ENCODE measurements at regions of chr18 and their contacts with region 1.

Region 1: GRCh38 chr18:48030616-48031480 is 100.4 kb upstream of the SMAD2 start:
- DNase-seq: peak in 3 of 10 donors; percentile 27 to 59 (median 44)
- H3K4me3 ChIP-seq: no peak overlapping the region
- H3K27ac ChIP-seq: peak overlapping the region in 1 of 59 donors; percentile 38
- H3K27me3 ChIP-seq: no peaks in the 10 kb centered on the region
- CTCF ChIP-seq: peak; percentile 40 to 82 (median 68)

Region 2: DNA sequence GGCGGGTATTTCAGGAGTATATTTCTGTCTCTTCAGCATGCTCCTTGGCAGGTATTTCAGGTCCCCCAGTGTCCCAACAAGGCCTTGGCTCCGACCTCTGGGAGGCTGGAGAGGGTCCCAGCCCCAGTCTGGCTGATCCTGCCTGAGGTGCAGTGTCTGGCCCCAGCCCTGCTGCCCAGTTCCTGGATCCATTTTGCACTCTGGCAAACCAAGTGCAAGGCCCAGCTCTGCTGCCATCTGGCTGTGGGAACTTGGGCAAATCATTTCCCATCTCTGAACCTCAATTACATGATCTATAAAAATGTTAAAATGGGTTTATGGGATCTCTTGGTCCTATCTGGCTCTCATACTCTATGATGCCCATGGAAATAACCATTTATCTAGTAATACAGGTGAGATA is 314.7 kb after region 1 on chr18:
- intact Hi-C with region 1: loop called in 1 of 2 experiments (anchors 10 kb)
- DNase-seq: no peak
- H3K4me3 ChIP-seq: no peak overlapping the region
- H3K27ac ChIP-seq: peak overlapping the region in 11 of 59 donors; percentile 6 to 70 (median 28)
- H3K27me3 ChIP-seq: no peaks in the 10 kb centered on the region
- CTCF ChIP-seq: peak in 42 of 56 donors; percentile 10 to 53 (median 30)

Measured in dorsolateral prefrontal cortex (tissue), 120 donors.